AG04450 (cell line): ENCODE measurements at regions of chr10 and their contacts with region 1.

Region 1: GRCh38 chr10:69914398-69915214 is 112.9 kb downstream of the COL13A1 start:
- DNase-seq: peak; percentile 39
- H3K4me3 ChIP-seq: no peak overlapping the region
- H3K27ac ChIP-seq: no peak overlapping the region
- H3K27me3 ChIP-seq: no peaks in the 10 kb centered on the region
- CTCF ChIP-seq: peak; percentile 87

Region 2: GRCh38 chr10:69639291-69640195 is 275.1 kb before region 1 on chr10:
- CTCF ChIA-PET with region 1: interaction called, 61 read pairs
- POLR2A ChIA-PET with region 1: no interaction called
- DNase-seq: peak; percentile 32
- H3K4me3 ChIP-seq: no peak overlapping the region
- H3K27ac ChIP-seq: no peak overlapping the region
- H3K27me3 ChIP-seq: peaks cover 64% of the 10 kb centered on the region
- CTCF ChIP-seq: peak; percentile 89

Region 3: GRCh38 chr10:69716711-69717560 is 197.7 kb before region 1 on chr10:
- CTCF ChIA-PET with region 1: interaction called, 11 read pairs
- POLR2A ChIA-PET with region 1: no interaction called
- DNase-seq: no peak
- H3K4me3 ChIP-seq: no peak overlapping the region
- H3K27ac ChIP-seq: no peak overlapping the region
- H3K27me3 ChIP-seq: peaks cover 5% of the 10 kb centered on the region
- CTCF ChIP-seq: peak; percentile 77

Region 4: DNA sequence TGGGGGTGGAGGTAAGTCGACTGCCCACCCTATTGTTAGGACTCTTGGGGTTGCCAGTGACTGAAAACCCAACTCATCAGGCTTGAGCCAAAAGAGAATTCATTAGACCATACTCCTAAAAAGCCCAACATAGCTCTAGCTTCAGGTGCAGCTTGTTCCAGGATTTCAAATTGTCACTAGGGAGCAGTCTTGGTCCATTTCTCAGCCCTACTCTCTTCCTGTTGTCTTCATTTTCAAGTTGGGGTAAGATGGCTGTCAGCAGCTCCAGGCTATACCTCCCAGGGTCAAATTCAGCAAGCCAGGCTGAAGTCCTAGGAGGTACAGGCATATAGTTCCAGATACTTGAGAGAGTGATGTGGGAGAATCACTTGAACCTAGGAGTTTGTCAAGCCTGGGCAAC is 127.8 kb before region 1 on chr10:
- CTCF ChIA-PET with region 1: interaction called, 153 read pairs
- POLR2A ChIA-PET with region 1: no interaction called
- DNase-seq: no peak
- H3K4me3 ChIP-seq: no peak overlapping the region
- H3K27ac ChIP-seq: no peak overlapping the region
- H3K27me3 ChIP-seq: peaks cover 32% of the 10 kb centered on the region
- CTCF ChIP-seq: peak; percentile 54

Region 5: DNA sequence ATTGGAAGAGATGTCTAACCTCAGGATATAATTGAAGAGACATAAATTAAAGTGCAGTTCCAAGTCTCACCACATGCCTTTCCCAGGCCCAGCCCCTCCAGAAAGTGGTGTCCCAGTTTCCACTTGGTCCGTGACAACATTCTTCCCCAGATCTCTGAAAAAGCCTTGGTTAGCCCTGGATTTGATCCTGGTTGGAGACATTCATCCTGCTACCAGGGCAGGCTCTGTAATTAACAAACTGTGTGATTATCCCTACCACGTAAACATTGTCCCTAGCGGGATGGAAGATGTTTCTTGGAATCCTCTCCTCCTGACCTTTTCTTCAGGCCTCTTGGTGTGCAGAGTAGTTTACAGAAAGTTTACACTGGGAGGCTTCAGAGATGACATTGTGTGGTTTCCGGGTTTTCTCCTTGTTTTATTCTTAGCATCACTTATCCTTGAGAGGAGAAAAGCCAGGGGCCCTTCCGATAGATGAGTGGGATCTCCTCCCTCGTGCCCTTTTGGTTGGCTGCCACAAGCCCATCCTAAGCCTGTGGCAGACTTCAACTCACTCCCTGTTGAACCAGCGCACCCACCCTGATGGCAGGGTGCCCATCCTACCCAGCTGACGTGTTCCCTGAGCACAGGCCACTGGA is 29.1 kb before region 1 on chr10:
- CTCF ChIA-PET with region 1: interaction called, 10 read pairs
- POLR2A ChIA-PET with region 1: no interaction called
- DNase-seq: no peak
- H3K4me3 ChIP-seq: no peak overlapping the region
- H3K27ac ChIP-seq: no peak overlapping the region
- H3K27me3 ChIP-seq: no peaks in the 10 kb centered on the region
- CTCF ChIP-seq: peak; percentile 54

Region 6: GRCh38 chr10:69925111-69925510 is 10.5 kb after region 1 on chr10:
- CTCF ChIA-PET with region 1: interaction called, 14 read pairs
- POLR2A ChIA-PET with region 1: interaction called, 3 read pairs
- DNase-seq: no peak
- H3K4me3 ChIP-seq: no peak overlapping the region
- H3K27ac ChIP-seq: no peak overlapping the region
- H3K27me3 ChIP-seq: no peaks in the 10 kb centered on the region
- CTCF ChIP-seq: no peak